ENCODE measurements at regions of chr18 and their contacts with region 1.

Region 1: GRCh38 chr18:74196220-74197119 is 48.1 kb downstream of the TIMM21 start:
- DNase-seq: peak in 2 of 6 donors; percentile 39 to 63
- ATAC-seq: peak; percentile 88 to 95 (median 92)
- H3K4me3 ChIP-seq: peak overlapping the region in 2 of 4 donors; percentile 24 to 35
- H3K27ac ChIP-seq: peak overlapping the region in 2 of 4 donors; percentile 56 to 62
- H3K4me1 ChIP-seq: peaks cover 8 to 15% (median 10%) of the 10 kb centered on the region in 3 donors
- H3K27me3 ChIP-seq: no peaks in the 10 kb centered on the region
- CTCF ChIP-seq: peak; percentile 62 to 85 (median 78)

Region 2: DNA sequence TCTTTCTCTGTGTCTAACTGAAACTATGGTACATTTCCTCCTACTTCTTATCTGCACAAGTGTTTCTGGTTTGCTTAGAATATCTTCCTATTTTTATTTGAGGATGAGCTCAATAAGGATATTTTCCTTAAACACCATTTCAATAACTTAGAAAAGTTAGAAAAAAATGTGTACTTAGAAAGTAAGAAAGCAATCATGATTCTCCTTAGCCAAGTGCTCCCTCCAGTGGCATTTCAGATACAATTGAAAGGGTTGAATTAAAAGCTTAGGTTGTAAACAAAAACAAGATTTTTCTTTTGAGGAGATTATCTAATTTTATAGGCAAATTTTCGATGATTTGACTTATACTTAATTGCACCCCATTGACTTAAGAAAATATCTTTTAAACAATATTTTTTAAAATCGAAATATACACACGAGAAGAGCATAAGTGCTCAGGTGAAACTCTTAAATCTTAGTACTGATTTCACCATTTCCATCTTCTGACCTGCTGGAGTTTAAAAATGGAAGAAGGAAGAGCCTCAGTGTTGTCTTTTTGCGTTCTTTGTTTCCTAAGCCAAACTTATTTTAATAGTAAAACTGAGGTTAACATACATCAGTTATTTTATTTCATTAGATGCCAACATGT is 146.1 kb after region 1 on chr18:
- intact Hi-C with region 1: loop called in 2 of 3 experiments (anchors 5 kb)
- DNase-seq: peak in 3 of 6 donors; percentile 20 to 41 (median 27)
- ATAC-seq: peak; percentile 61 to 83 (median 77)
- H3K4me3 ChIP-seq: no peak overlapping the region
- H3K27ac ChIP-seq: no peak overlapping the region
- H3K4me1 ChIP-seq: no peaks in the 10 kb centered on the region
- H3K27me3 ChIP-seq: no peaks in the 10 kb centered on the region
- CTCF ChIP-seq: peak in 3 of 4 donors; percentile 35 to 66 (median 50)

Region 3: DNA sequence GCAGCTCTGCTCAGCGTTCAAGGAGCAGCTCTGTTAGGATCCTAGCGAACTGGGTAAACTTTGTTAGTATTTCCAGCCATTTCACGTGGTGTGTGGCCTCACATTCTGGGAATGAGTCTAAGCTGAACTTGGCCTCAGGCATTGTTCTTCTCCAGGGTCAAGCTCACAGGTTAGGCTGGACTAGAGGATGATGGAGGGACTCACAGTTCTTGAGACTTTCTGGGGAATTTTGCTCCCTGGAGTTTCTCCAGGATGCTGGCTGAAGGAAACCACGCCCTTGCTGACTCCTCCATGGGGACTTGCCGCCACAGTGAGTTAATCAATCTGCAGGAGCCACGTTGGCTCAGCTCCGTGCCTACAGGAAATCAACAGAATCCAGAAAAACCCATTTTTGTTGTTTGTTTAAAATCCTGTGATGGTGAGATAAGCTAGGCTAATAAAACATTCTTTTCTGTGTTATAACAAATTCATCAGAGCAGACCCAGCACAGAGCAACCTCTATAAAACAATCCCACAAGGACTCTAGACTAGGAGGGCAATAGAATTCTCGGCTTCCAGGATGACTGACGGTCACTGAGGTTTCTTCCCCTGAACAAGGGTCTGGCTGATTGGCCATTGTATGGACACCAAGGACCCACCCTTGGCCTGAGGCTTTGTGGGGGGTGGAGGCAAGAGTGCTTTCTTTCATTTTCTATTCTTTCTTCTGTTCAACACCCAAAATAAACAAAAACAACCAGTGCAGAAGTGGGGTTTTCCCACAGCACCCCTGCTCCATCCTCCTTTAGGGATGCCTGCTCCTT is 350.5 kb after region 1 on chr18:
- intact Hi-C with region 1: loop called in 1 of 3 experiments (anchors 10 kb)
- DNase-seq: no peak
- ATAC-seq: peak in 3 of 4 donors; percentile 40 to 49 (median 47)
- H3K4me3 ChIP-seq: no peak overlapping the region
- H3K27ac ChIP-seq: peak overlapping the region in 3 of 4 donors; percentile 25 to 64 (median 31)
- H3K4me1 ChIP-seq: peaks cover 0 to 13% (median 0%) of the 10 kb centered on the region in 3 donors
- H3K27me3 ChIP-seq: no peaks in the 10 kb centered on the region
- CTCF ChIP-seq: no peak

Region 4: GRCh38 chr18:74748809-74749208 is 552.3 kb after region 1 on chr18:
- intact Hi-C with region 1: no loop called
- DNase-seq: no peak
- ATAC-seq: peak in 2 of 4 donors; percentile 72 to 74
- H3K4me3 ChIP-seq: no peak overlapping the region
- H3K27ac ChIP-seq: no peak overlapping the region
- H3K4me1 ChIP-seq: no peaks in the 10 kb centered on the region
- H3K27me3 ChIP-seq: no peaks in the 10 kb centered on the region
- CTCF ChIP-seq: no peak

Measured in pancreas (tissue), 10 donors.